CD4-positive, alpha-beta T cell (primary cell): ENCODE measurements at regions of chr12 and their contacts with region 1.

Region 1: GRCh38 chr12:121719926-121720414 is 7.4 kb downstream of the TMEM120B start:
- DNase-seq: no peak
- ATAC-seq: no peak
- H3K4me3 ChIP-seq: no peak overlapping the region
- H3K4me3 Mint-ChIP-seq: no peak overlapping the region
- H3K27ac ChIP-seq: no peak overlapping the region
- H3K27ac Mint-ChIP-seq: no peak overlapping the region
- H3K4me1 ChIP-seq: no peaks in the 10 kb centered on the region
- H3K4me1 Mint-ChIP-seq: no peaks in the 10 kb centered on the region
- H3K27me3 ChIP-seq: no peaks in the 10 kb centered on the region
- H3K27me3 Mint-ChIP-seq: no peaks in the 10 kb centered on the region
- CTCF ChIP-seq: no peak

Region 2: DNA sequence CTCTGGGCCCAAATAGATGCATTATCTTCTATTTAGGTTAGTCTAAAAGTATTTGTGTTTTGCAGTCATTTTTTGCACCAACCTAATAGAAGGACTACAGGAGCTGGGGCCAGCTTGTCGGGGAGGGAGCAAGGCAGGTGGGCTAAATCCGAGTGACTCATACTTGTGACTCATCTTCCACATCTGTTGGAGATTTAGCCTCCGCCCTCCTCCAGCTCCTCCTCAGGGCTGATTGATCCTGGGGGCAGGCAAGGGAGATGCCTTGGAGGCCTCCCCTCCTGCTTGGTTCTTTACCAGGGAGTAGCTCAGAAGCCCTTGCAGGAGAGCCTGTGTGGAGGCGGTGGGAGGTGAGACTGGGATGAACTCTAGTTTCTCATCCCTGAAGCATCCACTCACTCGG is 45.6 kb after region 1 on chr12:
- CTCF ChIA-PET with region 1: no interaction called
- POLR2A ChIA-PET with region 1: no interaction called
- intact Hi-C with region 1: loop called in 1 of 2 experiments (anchors 2 kb)
- DNase-seq: no peak
- ATAC-seq: no peak
- H3K4me3 ChIP-seq: no peak overlapping the region
- H3K4me3 Mint-ChIP-seq: no peak overlapping the region
- H3K27ac ChIP-seq: no peak overlapping the region
- H3K27ac Mint-ChIP-seq: no peak overlapping the region
- H3K4me1 ChIP-seq: no peaks in the 10 kb centered on the region
- H3K4me1 Mint-ChIP-seq: no peaks in the 10 kb centered on the region
- H3K27me3 ChIP-seq: no peaks in the 10 kb centered on the region
- H3K27me3 Mint-ChIP-seq: no peaks in the 10 kb centered on the region
- CTCF ChIP-seq: no peak

Region 3: DNA sequence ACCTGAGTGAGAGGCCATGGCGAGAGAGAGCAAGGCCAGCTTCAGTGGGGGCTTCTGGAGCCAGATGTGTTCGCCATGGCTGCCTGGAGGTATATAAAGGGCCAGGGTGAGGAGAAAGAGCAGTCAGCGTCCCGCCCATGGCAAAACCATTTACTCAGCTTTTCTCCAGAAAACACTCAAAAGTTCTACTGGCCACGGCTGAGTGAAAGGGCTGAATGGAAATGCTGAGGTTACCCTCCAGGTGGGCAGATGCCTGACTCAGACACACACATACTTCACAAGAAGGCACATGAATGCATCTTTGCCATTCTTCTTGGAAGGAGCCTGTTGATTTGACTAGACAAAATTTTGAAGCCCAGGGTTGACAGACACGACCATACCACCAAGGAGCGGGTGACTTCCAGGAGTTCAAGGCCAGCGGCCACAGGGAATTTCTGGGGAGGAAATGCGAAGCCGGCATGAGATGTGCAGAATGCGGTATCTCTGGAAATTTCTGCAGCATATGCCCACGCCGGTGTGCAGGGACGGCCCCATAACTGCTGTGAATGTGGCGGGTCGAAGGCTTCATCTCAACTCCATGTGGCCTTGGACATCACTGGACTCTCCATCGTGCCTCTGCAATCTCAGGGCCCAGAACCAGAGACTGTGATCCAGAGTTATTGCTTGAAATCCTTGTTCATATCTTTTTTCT is 454.3 kb after region 1 on chr12 and contains the start of gene IL31:
- CTCF ChIA-PET with region 1: no interaction called
- POLR2A ChIA-PET with region 1: no interaction called
- intact Hi-C with region 1: loop called in 1 of 2 experiments (anchors 10 kb)
- DNase-seq: no peak
- ATAC-seq: no peak
- H3K4me3 ChIP-seq: no peak within 1 kb of the TSS
- H3K4me3 Mint-ChIP-seq: no peak within 1 kb of the TSS
- H3K27ac ChIP-seq: no peak within 1 kb of the TSS
- H3K27ac Mint-ChIP-seq: no peak within 1 kb of the TSS
- H3K4me1 ChIP-seq: no peaks in the 10 kb centered on the region
- H3K4me1 Mint-ChIP-seq: no peaks in the 10 kb centered on the region
- H3K27me3 ChIP-seq: no peaks in the 10 kb centered on the region
- H3K27me3 Mint-ChIP-seq: no peaks in the 10 kb centered on the region
- CTCF ChIP-seq: no peak
- total RNA-seq, gene IL31: not detected